ENCODE measurements at regions of chr2 and their contacts with region 1.

Region 1: DNA sequence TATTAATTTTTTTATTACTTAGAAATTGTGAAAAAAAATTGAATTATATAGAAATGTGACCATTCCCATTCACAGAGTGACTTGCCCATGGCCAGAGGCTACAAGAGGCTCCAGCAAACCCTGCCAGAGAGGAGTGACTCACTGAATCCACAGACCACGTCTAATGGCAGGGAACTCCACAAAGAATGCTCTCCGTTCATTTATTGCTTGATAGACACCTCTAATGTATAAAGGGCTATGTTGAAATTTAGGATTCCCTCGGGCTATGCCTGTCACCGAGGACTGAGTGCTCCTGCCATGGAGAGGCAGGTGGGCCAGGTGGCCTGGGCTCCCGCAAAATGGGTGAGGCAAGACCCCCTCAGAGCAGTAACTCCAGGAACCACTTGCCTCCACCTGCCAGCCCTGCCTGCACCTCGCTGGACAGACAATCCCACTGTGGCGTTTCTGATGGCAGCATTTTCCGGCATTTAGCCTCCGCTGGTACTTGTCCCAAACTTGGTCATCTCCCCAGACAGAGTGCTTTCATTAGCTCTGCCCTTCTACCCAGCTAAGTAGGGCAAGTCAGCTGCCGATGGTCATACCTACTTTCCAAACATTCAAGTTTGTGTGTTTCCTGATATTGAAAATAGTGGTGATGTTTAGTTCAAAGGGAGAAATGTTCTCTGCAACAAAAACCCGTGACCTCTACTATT is 200.3 kb downstream of the PRKCE start:
- DNase-seq: no peak
- ATAC-seq: no peak

Region 2: DNA sequence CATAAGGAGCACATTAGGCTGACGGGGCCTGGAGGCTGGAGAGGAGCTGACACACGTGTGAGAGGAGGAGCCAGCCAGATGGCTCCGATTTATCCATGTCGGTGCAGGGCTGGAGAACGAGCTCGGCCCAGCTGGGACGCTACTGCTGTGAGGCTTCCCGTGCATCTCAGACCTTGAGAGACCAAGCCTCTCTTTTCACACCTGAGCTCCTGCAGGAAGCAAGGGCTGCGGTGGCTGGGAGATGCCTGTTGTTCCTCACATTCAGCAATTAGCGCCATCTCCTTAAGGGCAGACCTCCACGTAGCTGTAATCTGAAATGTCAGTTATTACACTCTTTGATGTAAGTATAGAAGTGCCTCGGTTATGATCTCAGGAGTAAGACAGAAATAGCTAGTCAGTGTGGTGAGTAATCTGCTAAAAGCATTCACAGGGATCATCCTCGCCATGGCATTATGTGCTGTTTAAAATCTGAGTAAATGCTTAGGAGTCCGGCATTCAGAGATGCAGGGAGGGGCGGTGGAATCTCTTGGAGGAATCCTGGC is 92.4 kb before region 1 on chr2:
- intact Hi-C with region 1: no loop called
- DNase-seq: no peak
- ATAC-seq: peak; percentile 84

Region 3: GRCh38 chr2:45826884-45827635 is 24.7 kb before region 1 on chr2:
- intact Hi-C with region 1: loop called (anchors 1 kb)
- DNase-seq: no peak
- ATAC-seq: no peak